HCT116 (cell line): ENCODE measurements at regions of chr13 and their contacts with region 1.

Region 1: DNA sequence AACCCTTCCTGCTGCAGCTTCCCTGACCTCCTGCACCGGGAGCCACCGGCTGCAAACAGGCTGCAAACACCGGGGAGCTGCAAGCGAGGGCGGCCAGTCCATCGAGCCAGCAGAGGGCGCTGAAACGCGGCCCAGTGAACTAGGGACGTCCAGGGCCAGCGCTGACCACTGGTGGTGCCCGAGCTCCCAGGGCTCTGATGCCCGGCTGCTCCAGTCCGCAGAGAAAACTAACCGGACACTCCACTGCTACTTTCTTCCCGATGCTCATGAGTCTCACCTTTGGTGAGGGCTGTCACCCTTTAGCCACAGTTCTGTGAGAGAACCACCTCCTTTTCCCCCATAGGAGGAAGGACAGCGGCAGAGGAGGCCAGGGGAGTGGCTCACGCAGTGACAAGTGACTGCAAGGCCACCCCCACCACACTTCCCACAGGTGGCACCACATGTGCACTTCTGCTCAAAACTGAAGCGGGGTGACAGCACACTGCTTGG is 82.8 kb upstream of the MTIF3 start:
- DNase-seq: peak; percentile 62
- ATAC-seq: peak; percentile 98
- H3K4me3 ChIP-seq: peak overlapping the region; percentile 27 to 31; a peak in 3 of 4 replicates
- H3K27ac ChIP-seq: no peak overlapping the region
- H3K4me1 ChIP-seq: peaks cover 0 to 7% of the 10 kb centered on the region in 2 experiments; a peak in 1 of 4 replicates
- H3K27me3 ChIP-seq: no peaks in the 10 kb centered on the region
- CTCF ChIP-seq: peak; percentile 96 to 97 (median 97)
- POLR2A ChIP-seq: no peak
- RAD21 ChIP-seq: peak; percentile 75

Region 2: DNA sequence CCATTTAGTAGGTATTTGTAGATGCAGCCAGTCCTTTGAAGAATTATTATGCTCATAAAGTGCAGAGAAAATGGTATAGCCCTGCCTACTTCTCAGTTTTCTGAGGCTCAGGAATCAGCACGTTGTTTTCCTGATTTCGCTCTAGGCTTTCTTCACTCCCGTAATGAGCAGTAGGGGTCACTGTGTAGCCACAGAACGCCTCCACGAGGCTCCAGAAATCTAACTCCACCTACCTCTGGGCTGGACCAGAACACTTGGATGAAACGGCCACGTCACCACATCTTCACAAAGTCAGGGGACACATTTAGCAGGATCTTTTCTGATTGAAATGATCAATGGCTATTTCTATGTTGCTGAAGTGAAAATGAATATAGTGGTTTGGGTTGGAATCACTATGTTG is 158.5 kb before region 1 on chr13:
- CTCF ChIA-PET with region 1: interaction called, 4 read pairs
- POLR2A ChIA-PET with region 1: no interaction called
- RAD21 ChIA-PET with region 1: no interaction called
- intact Hi-C with region 1: loop called (anchors 2 kb)
- DNase-seq: peak; percentile 85
- ATAC-seq: peak; percentile 96
- H3K4me3 ChIP-seq: no peak overlapping the region
- H3K27ac ChIP-seq: no peak overlapping the region
- H3K4me1 ChIP-seq: peaks cover 12 to 22% of the 10 kb centered on the region in 2 experiments; a peak in 3 of 4 replicates
- H3K27me3 ChIP-seq: no peaks in the 10 kb centered on the region
- CTCF ChIP-seq: peak; percentile 67 to 82 (median 79); a peak in 5 of 6 replicates
- POLR2A ChIP-seq: no peak
- RAD21 ChIP-seq: peak; percentile 80

Region 3: GRCh38 chr13:27712421-27712820 is 179.2 kb after region 1 on chr13:
- CTCF ChIA-PET with region 1: interaction called, 7 read pairs
- POLR2A ChIA-PET with region 1: no interaction called
- RAD21 ChIA-PET with region 1: no interaction called
- intact Hi-C with region 1: loop called (anchors 1 kb)
- DNase-seq: no peak
- ATAC-seq: peak; percentile 67
- H3K4me3 ChIP-seq: no peak overlapping the region
- H3K27ac ChIP-seq: no peak overlapping the region
- H3K4me1 ChIP-seq: no peaks in the 10 kb centered on the region
- H3K27me3 ChIP-seq: no peaks in the 10 kb centered on the region
- CTCF ChIP-seq: peak; percentile 19 to 28 (median 22); a peak in 3 of 6 replicates
- POLR2A ChIP-seq: no peak
- RAD21 ChIP-seq: peak; percentile 56

Region 4: GRCh38 chr13:27958941-27959815 is 426.0 kb after region 1 on chr13:
- CTCF ChIA-PET with region 1: interaction called, 14 read pairs
- POLR2A ChIA-PET with region 1: interaction called, 3 read pairs
- RAD21 ChIA-PET with region 1: no interaction called
- intact Hi-C with region 1: loop called (anchors 5 kb)
- DNase-seq: no peak
- ATAC-seq: no peak
- H3K4me3 ChIP-seq: no peak overlapping the region
- H3K27ac ChIP-seq: no peak overlapping the region
- H3K4me1 ChIP-seq: peaks cover 6 to 9% of the 10 kb centered on the region in 2 experiments; a peak in 2 of 4 replicates
- H3K27me3 ChIP-seq: no peaks in the 10 kb centered on the region
- CTCF ChIP-seq: no peak
- POLR2A ChIP-seq: no peak
- RAD21 ChIP-seq: no peak

Region 5: GRCh38 chr13:27980280-27980998 is 447.2 kb after region 1 on chr13:
- CTCF ChIA-PET with region 1: interaction called, 3 read pairs
- POLR2A ChIA-PET with region 1: no interaction called
- RAD21 ChIA-PET with region 1: no interaction called
- intact Hi-C with region 1: loop called (anchors 10 kb)
- DNase-seq: no peak
- ATAC-seq: no peak
- H3K4me3 ChIP-seq: no peak overlapping the region
- H3K27ac ChIP-seq: no peak overlapping the region
- H3K4me1 ChIP-seq: no peaks in the 10 kb centered on the region
- H3K27me3 ChIP-seq: no peaks in the 10 kb centered on the region
- CTCF ChIP-seq: no peak
- POLR2A ChIP-seq: no peak
- RAD21 ChIP-seq: no peak